ENCODE measurements at regions of chr5 and their contacts with region 1.

Region 1: GRCh38 chr5:178626484-178627258 is at the start of gene CLK4:
- DNase-seq: peak; percentile 93
- ATAC-seq: peak; percentile 91
- H3K4me3 ChIP-seq: peak within 1 kb of the TSS; percentile 92
- H3K27ac ChIP-seq: peak within 1 kb of the TSS; percentile 98
- H3K4me1 ChIP-seq: peaks cover 2% of the 10 kb centered on the region; the same call in 1 of the 2 replicates
- H3K27me3 ChIP-seq: no peaks in the 10 kb centered on the region
- CTCF ChIP-seq: no peak
- POLR2A ChIP-seq: peak; percentile 73; the same call in 1 of the 2 replicates
- RAD21 ChIP-seq: no peak
- total RNA-seq, gene CLK4: 8.2 and 14.4 TPM in 2 replicates

Region 2: DNA sequence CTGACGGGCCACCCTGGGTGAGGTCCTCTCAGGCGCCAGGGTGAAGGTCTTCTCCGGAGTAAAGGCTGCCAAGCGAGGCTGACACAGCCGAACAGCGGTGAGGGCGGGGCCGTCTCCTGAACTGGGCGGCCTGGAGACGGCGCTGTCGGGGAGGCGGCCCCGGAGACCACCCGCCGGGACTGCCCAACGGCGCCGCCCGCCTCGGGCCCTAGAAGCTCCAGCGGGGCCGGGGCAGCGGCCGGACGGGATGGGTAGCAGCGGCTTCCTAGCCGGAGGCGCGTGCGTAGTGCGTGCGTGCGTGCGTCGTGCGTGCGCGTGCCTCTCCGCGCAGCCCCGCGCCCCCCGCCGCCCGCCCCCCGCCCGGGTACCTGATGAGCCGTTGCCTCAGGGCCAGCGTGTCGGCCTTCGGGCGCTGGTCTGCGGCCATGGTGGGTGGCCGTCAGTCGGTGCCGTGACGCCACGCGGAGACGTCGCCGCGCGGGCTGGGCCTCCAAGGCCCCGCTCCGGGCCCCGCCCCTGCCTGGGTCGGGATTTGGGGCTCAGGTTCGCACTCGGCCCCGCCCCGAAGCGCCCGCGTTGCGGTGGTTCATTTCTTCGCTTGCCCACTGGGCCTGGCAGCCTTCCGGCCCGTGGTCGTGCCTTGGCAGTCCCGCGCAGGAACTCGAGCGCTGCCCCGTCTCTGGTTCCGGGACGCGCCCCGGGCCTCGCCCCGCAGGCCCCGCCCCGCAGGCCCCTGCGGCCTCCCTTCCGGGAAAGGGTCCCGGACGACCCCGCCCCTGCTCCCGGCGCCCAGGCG is 394.3 kb before region 1 on chr5 and contains the start of gene PHYKPL:
- CTCF ChIA-PET with region 1: interaction called, 4 read pairs
- POLR2A ChIA-PET with region 1: no interaction called
- dilution Hi-C with region 1: no loop called
- in situ Hi-C with region 1: no loop called
- intact Hi-C with region 1: loop called (anchors 5 kb)
- DNase-seq: peak; percentile 58
- ATAC-seq: peak; percentile 79
- H3K4me3 ChIP-seq: peak within 1 kb of the TSS; percentile 72
- H3K27ac ChIP-seq: peak within 1 kb of the TSS; percentile 69
- H3K4me1 ChIP-seq: peaks cover 9% of the 10 kb centered on the region
- H3K27me3 ChIP-seq: no peaks in the 10 kb centered on the region
- CTCF ChIP-seq: 0 out of 2 replicates have a peak, but pooled peaks have one; percentile 16
- POLR2A ChIP-seq: peak; percentile 17; the same call in 1 of the 2 replicates
- RAD21 ChIP-seq: no peak
- total RNA-seq, gene PHYKPL: 8.6 and 10.0 TPM in 2 replicates

Region 3: GRCh38 chr5:178602752-178603151 is 23.9 kb before region 1 on chr5:
- CTCF ChIA-PET with region 1: no interaction called
- POLR2A ChIA-PET with region 1: no interaction called
- dilution Hi-C with region 1: no loop called
- in situ Hi-C with region 1: no loop called
- intact Hi-C with region 1: loop called (anchors 2 kb)
- DNase-seq: peak; percentile 72
- ATAC-seq: peak; percentile 56
- H3K4me3 ChIP-seq: no peak overlapping the region
- H3K27ac ChIP-seq: no peak overlapping the region
- H3K4me1 ChIP-seq: peaks cover 2% of the 10 kb centered on the region; the same call in 1 of the 2 replicates
- H3K27me3 ChIP-seq: no peaks in the 10 kb centered on the region
- CTCF ChIP-seq: no peak
- POLR2A ChIP-seq: no peak
- RAD21 ChIP-seq: no peak

Region 4: GRCh38 chr5:178859625-178860531 is 233.2 kb after region 1 on chr5 and contains the start of gene ZNF354B:
- CTCF ChIA-PET with region 1: no interaction called
- POLR2A ChIA-PET with region 1: no interaction called
- dilution Hi-C with region 1: no loop called
- in situ Hi-C with region 1: no loop called
- intact Hi-C with region 1: loop called (anchors 5 kb)
- DNase-seq: peak; percentile 92
- ATAC-seq: peak; percentile 97
- H3K4me3 ChIP-seq: peak within 1 kb of the TSS; percentile 73
- H3K27ac ChIP-seq: peak within 1 kb of the TSS; percentile 49
- H3K4me1 ChIP-seq: peaks cover 2% of the 10 kb centered on the region; the same call in 1 of the 2 replicates
- H3K27me3 ChIP-seq: no peaks in the 10 kb centered on the region
- CTCF ChIP-seq: 0 out of 2 replicates have a peak, but pooled peaks have one; percentile 7
- POLR2A ChIP-seq: peak; percentile 50; the same call in 1 of the 2 replicates
- RAD21 ChIP-seq: no peak
- total RNA-seq, gene ZNF354B: 5.0 TPM in 2 replicates

Region 5: DNA sequence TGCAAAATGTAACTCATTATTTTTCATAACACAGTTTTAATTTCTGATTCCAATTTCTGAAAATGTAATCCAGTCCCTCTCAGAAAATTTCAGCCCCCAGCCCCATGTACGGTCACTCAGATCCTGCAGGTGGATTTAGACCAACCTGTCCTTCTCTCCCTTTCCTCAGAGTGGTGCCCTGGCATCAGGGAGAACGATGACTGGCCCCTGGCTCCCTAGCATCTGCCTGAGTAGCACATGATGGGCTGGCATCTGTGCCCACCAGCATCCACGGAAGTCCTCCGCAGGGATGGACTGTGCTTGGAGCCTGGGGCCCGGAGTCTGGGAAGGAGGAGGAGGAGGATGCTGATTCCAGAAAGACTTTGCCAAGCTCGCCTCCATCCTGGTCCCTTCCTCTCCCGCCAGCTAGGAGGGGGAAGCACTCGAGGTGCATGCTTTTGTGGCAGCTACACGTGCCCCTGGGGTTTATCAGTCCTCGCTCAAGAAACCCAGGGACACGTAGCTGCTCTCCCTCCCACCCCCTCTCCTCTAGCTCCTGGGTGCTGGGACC is 869.3 kb after region 1 on chr5:
- CTCF ChIA-PET with region 1: no interaction called
- POLR2A ChIA-PET with region 1: no interaction called
- dilution Hi-C with region 1: no loop called
- in situ Hi-C with region 1: no loop called
- intact Hi-C with region 1: loop called (anchors 5 kb)
- DNase-seq: no peak
- ATAC-seq: no peak
- H3K4me3 ChIP-seq: no peak overlapping the region
- H3K27ac ChIP-seq: no peak overlapping the region
- H3K4me1 ChIP-seq: peaks cover 2% of the 10 kb centered on the region; the same call in 1 of the 2 replicates
- H3K27me3 ChIP-seq: peaks cover 8% of the 10 kb centered on the region
- CTCF ChIP-seq: 0 out of 2 replicates have a peak, but pooled peaks have one; percentile 8
- POLR2A ChIP-seq: no peak
- RAD21 ChIP-seq: peak; percentile 11; the same call in 1 of the 2 replicates

Region 6: DNA sequence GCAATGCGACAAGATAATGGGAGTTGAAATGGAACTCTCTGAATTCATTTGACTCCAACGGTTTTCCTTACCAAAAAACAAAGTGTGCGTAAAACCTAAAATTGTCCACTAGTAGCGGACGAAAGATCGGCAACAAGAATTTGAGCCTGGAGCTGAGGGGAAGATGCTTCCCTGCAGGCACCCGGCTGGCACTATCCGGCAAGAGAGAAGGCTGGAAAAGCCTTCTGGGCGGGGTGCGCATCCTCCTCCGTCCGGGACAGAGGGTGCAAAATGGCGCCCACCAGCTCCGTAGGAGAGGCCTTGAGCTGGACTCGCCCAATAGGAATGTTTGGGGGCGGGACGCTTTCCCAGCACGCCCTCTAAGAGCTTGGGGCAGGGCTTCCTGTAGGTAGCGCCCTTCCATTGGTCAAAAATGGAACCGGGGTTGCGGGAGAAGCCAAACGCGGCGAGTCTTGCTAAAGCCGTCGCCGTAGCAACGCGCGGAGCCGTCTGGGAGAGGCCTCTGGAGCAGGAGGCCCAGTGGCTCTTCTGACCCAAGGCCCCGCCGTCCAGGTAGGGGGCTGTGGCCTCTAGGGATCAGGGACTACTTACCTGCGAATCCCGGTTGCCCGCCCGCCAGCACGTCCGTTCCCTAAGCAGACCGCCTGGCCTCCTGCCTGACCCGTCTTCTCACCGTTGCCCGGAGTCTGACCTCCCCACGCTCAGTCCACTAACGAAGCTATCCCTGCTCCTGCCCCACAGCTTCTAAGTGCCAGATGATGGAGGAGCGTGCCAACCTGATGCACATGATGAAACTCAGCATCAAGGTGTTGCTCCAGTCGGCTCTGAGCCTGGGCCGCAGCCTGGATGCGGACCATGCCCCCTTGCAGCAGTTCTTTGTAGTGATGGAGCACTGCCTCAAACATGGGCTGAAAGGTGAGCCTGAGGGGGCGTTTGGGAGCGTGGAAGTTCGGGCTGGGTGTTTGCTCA is 932.9 kb after region 1 on chr5:
- CTCF ChIA-PET with region 1: no interaction called
- POLR2A ChIA-PET with region 1: no interaction called
- dilution Hi-C with region 1: no loop called
- in situ Hi-C with region 1: no loop called
- intact Hi-C with region 1: loop called (anchors 10 kb)
- DNase-seq: peak; percentile 98
- ATAC-seq: peak; percentile 100
- H3K4me3 ChIP-seq: peak overlapping the region; percentile 50
- H3K27ac ChIP-seq: peak overlapping the region; percentile 61
- H3K4me1 ChIP-seq: peaks cover 3% of the 10 kb centered on the region; the same call in 1 of the 2 replicates
- H3K27me3 ChIP-seq: no peaks in the 10 kb centered on the region
- CTCF ChIP-seq: no peak
- POLR2A ChIP-seq: peak; percentile 89
- RAD21 ChIP-seq: no peak

Measured in IMR-90 (cell line).